Endothelial cell of umbilical vein (primary cell): ENCODE measurements at regions of chr17 and their contacts with region 1.

Region 1: DNA sequence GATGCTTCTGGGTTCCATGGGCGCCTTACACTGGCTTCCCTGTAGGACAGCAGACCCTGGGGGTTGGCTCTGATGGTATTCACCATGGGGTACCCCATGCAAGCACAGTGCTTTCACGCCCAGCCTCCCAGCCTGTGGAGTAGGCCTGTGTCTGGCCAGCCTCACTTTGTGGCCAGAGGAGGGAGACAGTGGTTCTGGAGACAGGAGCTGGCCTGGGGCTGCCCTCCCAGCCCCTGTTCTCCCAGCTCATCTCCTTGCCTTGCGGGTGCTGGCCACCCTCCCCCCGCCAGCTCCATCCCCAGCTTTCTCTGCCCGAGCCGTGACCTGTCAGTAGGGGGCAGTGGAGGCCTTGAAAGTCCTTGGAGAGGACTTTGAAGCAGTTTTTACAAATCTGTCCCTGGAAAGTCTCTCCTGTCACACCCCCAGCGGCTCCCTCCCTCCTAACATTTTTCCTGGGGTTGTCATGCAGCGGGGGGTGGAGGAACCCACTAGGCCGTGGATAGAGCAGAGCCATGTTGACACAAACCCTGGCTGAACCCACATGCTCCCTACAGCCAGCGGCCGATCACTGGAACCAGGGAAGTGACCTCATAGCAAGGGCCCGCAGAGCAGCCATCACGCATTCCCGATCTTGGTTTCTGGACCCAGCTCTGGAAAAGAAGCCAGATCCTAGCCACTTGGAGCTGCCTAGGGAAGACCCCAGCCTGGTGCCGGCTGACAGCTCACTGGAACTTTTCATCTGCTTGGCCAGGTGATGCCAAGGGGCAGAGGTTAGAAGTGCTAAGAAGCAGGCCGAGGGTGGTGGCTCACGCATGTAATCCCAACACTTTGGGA is 289.4 kb downstream of the SEC14L1 start:
- DNase-seq: peak; percentile 92
- H3K4me3 ChIP-seq: no peak overlapping the region
- H3K27ac ChIP-seq: peak overlapping the region; percentile 31
- H3K4me1 ChIP-seq: peaks cover 24% of the 10 kb centered on the region
- H3K27me3 ChIP-seq: no peaks in the 10 kb centered on the region
- CTCF ChIP-seq: peak; percentile 81 to 85
- POLR2A ChIP-seq: peak; percentile 9

Region 2: GRCh38 chr17:77372444-77373298 is 57.5 kb before region 1 on chr17:
- CTCF ChIA-PET with region 1: interaction called, 8 read pairs
- POLR2A ChIA-PET with region 1: interaction called, 4 read pairs
- dilution Hi-C with region 1: no loop called
- intact Hi-C with region 1: loop called (anchors 2 kb)
- DNase-seq: peak; percentile 53
- H3K4me3 ChIP-seq: peak overlapping the region; percentile 38 to 91 (median 59)
- H3K27ac ChIP-seq: no peak overlapping the region
- H3K4me1 ChIP-seq: peaks cover 15% of the 10 kb centered on the region
- H3K27me3 ChIP-seq: no peaks in the 10 kb centered on the region
- CTCF ChIP-seq: no peak
- POLR2A ChIP-seq: no peak

Region 3: DNA sequence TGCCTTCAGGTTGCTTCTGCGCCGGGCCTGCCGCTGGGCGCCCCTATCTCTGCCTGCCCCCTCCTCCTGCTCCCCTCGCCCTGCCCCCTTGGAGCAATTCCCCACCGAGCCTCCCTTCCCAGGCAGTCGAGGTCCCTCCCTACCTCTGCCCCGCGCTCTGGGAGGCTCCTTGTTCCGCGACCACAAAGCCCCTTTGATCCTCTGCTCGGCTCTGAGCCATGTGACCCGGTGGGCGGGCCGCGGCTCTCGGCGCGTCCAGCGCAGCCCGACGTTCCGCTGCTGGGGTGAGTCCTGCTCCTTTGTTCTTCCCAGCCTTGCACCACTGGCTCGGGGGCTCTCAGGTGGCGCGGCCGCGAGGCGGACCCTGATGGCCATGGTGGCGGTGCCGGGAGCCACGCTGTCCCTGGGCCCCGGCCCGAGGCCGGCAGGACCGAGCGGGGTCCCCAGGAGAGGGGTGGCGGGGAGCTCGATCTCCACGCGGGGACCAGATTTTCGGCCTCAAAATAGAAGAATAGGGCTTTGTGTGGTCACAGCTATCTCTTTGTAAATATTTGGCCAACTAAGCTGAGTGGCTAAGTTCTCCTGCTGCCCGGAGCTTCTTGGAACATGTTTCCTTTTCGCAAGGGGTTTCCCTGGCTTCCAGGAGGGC is 21.2 kb after region 1 on chr17:
- CTCF ChIA-PET with region 1: interaction called, 39 read pairs
- POLR2A ChIA-PET with region 1: interaction called, 8 read pairs
- dilution Hi-C with region 1: no loop called
- intact Hi-C with region 1: loop called (anchors 2 kb)
- DNase-seq: peak; percentile 71
- H3K4me3 ChIP-seq: peak overlapping the region; percentile 70 to 81 (median 78)
- H3K27ac ChIP-seq: peak overlapping the region; percentile 48
- H3K4me1 ChIP-seq: peaks cover 28% of the 10 kb centered on the region
- H3K27me3 ChIP-seq: no peaks in the 10 kb centered on the region
- CTCF ChIP-seq: no peak
- POLR2A ChIP-seq: peak; percentile 35

Region 4: GRCh38 chr17:77471984-77472461 is 41.9 kb after region 1 on chr17:
- CTCF ChIA-PET with region 1: interaction called, 19 read pairs
- POLR2A ChIA-PET with region 1: no interaction called
- dilution Hi-C with region 1: no loop called
- intact Hi-C with region 1: no loop called
- DNase-seq: no peak
- H3K4me3 ChIP-seq: no peak overlapping the region
- H3K27ac ChIP-seq: no peak overlapping the region
- H3K4me1 ChIP-seq: peaks cover 22% of the 10 kb centered on the region
- H3K27me3 ChIP-seq: no peaks in the 10 kb centered on the region
- CTCF ChIP-seq: no peak
- POLR2A ChIP-seq: no peak

Region 5: GRCh38 chr17:77666881-77667395 is 236.8 kb after region 1 on chr17:
- CTCF ChIA-PET with region 1: no interaction called
- POLR2A ChIA-PET with region 1: no interaction called
- dilution Hi-C with region 1: no loop called
- intact Hi-C with region 1: no loop called
- DNase-seq: no peak
- H3K4me3 ChIP-seq: no peak overlapping the region
- H3K27ac ChIP-seq: no peak overlapping the region
- H3K4me1 ChIP-seq: no peaks in the 10 kb centered on the region
- H3K27me3 ChIP-seq: no peaks in the 10 kb centered on the region
- CTCF ChIP-seq: no peak
- POLR2A ChIP-seq: no peak